ENCODE measurements at regions of chr7 and their contacts with region 1.

Region 1: GRCh38 chr7:140249036-140249806 is 72.4 kb upstream of the KDM7A start:
- DNase-seq: no peak
- H3K4me3 Mint-ChIP-seq: no peak overlapping the region
- H3K27ac Mint-ChIP-seq: no peak overlapping the region
- H3K4me1 Mint-ChIP-seq: peaks cover 26% of the 10 kb centered on the region
- H3K27me3 Mint-ChIP-seq: no peaks in the 10 kb centered on the region

Region 2: DNA sequence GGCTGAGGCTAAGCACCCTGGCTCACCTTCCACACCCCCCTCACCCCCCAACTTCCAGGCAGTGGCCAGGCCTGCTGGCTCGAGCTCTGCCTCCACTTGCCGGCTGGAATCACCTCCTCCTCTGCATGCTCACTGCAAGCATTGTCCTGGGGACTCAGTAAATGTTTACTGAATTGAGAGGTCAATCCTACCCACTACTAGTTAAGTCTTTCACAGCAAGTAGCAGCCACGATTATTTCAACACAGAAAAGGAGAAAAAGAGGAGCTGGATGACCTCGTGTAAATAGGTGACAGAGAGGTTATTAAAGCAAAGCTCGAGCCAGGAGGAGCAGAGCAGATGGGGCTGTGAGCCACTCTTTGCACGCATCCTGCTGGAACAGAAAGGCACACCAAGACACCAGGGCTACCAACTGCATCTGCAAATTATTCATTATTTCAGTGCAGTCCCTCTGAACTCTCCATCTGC is 503.5 kb before region 1 on chr7:
- CTCF ChIA-PET with region 1: no interaction called
- POLR2A ChIA-PET with region 1: no interaction called
- intact Hi-C with region 1: no loop called
- DNase-seq: no peak
- H3K4me3 Mint-ChIP-seq: no peak overlapping the region
- H3K27ac Mint-ChIP-seq: no peak overlapping the region
- H3K4me1 Mint-ChIP-seq: peaks cover 6% of the 10 kb centered on the region
- H3K27me3 Mint-ChIP-seq: no peaks in the 10 kb centered on the region

Region 3: GRCh38 chr7:140230861-140231770 is 18.1 kb before region 1 on chr7:
- CTCF ChIA-PET with region 1: interaction called, 5 read pairs
- POLR2A ChIA-PET with region 1: interaction called, 22 read pairs
- intact Hi-C with region 1: loop called (anchors 1 kb)
- DNase-seq: peak; percentile 78
- H3K4me3 Mint-ChIP-seq: peak overlapping the region; percentile 79
- H3K27ac Mint-ChIP-seq: peak overlapping the region; percentile 99
- H3K4me1 Mint-ChIP-seq: peaks cover 32% of the 10 kb centered on the region
- H3K27me3 Mint-ChIP-seq: no peaks in the 10 kb centered on the region

Region 4: GRCh38 chr7:140260352-140261104 is 11.3 kb after region 1 on chr7:
- CTCF ChIA-PET with region 1: interaction called, 3 read pairs
- POLR2A ChIA-PET with region 1: interaction called, 17 read pairs
- intact Hi-C with region 1: loop called (anchors 1 kb)
- DNase-seq: no peak
- H3K4me3 Mint-ChIP-seq: no peak overlapping the region
- H3K27ac Mint-ChIP-seq: no peak overlapping the region
- H3K4me1 Mint-ChIP-seq: peaks cover 19% of the 10 kb centered on the region
- H3K27me3 Mint-ChIP-seq: no peaks in the 10 kb centered on the region

Region 5: DNA sequence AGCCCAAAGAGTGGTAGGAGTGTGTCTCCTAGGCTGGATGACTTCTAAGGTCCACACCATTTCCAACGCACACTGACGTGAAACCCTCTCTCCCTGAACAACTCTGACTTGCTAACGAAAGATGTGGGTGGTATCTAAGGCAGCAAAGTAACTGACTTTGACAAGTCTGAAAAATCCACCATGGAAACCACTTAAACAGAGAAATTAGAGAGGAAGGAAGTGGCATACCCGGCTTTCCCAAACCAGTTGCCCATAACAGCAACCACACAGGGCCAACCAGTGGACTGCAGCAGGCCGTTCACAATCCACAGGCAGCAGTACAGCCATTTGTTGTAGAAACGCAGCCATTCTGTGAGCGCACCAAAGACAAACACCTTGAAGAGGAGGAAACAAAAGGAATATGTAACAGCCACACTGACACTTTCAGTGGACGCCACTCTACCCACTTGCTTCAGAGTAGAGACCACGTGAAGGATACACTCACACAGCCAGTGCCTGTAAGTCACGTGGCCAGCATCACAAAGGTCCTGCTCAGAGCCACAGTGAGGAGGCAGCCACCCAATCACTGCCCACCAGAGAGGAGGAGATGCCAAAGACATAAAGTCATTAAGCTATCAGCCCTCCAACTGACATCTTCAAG is 109.3 kb after region 1 on chr7:
- CTCF ChIA-PET with region 1: no interaction called
- POLR2A ChIA-PET with region 1: interaction called, 4 read pairs
- intact Hi-C with region 1: loop called (anchors 1 kb)
- DNase-seq: peak; percentile 69
- H3K4me3 Mint-ChIP-seq: peak overlapping the region; percentile 46
- H3K27ac Mint-ChIP-seq: peak overlapping the region; percentile 97
- H3K4me1 Mint-ChIP-seq: peaks cover 34% of the 10 kb centered on the region
- H3K27me3 Mint-ChIP-seq: no peaks in the 10 kb centered on the region

Region 6: GRCh38 chr7:140425718-140426117 is 176.5 kb after region 1 on chr7:
- CTCF ChIA-PET with region 1: no interaction called
- POLR2A ChIA-PET with region 1: no interaction called
- intact Hi-C with region 1: no loop called
- DNase-seq: no peak
- H3K4me3 Mint-ChIP-seq: no peak overlapping the region
- H3K27ac Mint-ChIP-seq: no peak overlapping the region
- H3K4me1 Mint-ChIP-seq: no peaks in the 10 kb centered on the region
- H3K27me3 Mint-ChIP-seq: no peaks in the 10 kb centered on the region